T-cell (primary cell): ENCODE measurements at regions of chr16 and their contacts with region 1.

Region 1: DNA sequence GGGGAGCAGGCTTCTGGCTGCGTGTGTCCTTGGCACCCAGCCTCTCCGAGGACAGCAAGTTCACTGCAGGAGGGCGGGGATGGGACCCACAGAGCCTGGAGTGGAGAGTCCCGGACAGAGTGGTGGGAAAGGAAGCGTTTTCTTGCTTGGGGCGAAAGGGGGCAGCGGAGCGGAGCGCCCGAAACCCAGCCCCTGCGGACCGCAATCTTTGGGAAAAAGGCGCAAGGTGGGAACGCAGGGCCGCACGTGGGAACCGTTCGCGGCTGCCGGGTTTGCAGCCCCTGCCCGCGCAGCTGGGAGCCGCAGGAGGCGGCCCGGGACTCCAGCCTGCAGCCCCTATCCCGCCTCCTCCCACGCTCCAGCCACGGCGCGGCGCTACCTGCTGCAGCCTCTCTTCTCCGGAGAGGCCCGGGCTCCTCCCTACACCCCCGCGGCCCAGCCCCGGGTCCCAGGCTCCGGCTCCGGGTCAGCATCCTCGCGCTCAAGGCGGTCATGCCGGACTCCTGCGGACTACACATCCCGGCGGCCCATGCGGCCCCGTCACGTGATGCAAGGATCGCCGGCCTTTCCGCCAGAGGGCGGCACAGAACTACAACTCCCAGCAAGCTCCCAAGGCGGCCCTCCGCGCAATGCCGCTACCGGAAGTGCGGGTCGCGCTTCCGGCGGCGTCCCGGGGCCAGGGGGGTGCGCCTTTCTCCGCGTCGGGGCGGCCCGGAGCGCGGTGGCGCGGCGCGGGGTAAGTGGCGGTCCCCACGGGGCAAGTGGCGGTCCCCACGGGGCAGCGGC is at the starts of genes NTHL1 and TSC2:
- DNase-seq: peak; percentile 79 to 95 (median 86)
- ATAC-seq: peak; percentile 94 to 96 (median 96)
- H3K4me3 ChIP-seq: peak within 1 kb of the TSS; percentile 79 to 94
- H3K4me3 Mint-ChIP-seq: peak within 1 kb of the TSS; percentile 90 to 92 (median 90)
- H3K27ac ChIP-seq: peak within 1 kb of the TSS; percentile 38
- H3K27ac Mint-ChIP-seq: peak within 1 kb of the TSS; percentile 23 to 71
- H3K4me1 ChIP-seq: peaks cover 13 to 30% of the 10 kb centered on the region in 2 experiments
- H3K4me1 Mint-ChIP-seq: peaks cover 20 to 23% (median 20%) of the 10 kb centered on the region in 3 donors
- H3K27me3 ChIP-seq: no peaks in the 10 kb centered on the region
- H3K27me3 Mint-ChIP-seq: no peaks in the 10 kb centered on the region
- total RNA-seq, gene NTHL1: 5.8 to 24.1 (median 18.3) TPM
- total RNA-seq, gene TSC2: 134 to 181 (median 161) TPM

Region 2: GRCh38 chr16:2142942-2143877 is 95.7 kb after region 1 on chr16:
- CTCF ChIA-PET with region 1: interaction called in 1 of 2 experiments, 12 read pairs
- POLR2A ChIA-PET with region 1: interaction called in 1 of 2 experiments, 3 read pairs
- DNase-seq: no peak
- ATAC-seq: no peak
- H3K4me3 ChIP-seq: no peak overlapping the region
- H3K4me3 Mint-ChIP-seq: no peak overlapping the region
- H3K27ac ChIP-seq: no peak overlapping the region
- H3K27ac Mint-ChIP-seq: no peak overlapping the region
- H3K4me1 ChIP-seq: peaks cover 0 to 15% of the 10 kb centered on the region in 2 experiments
- H3K4me1 Mint-ChIP-seq: peaks cover 4 to 8% (median 4%) of the 10 kb centered on the region in 3 donors
- H3K27me3 ChIP-seq: peaks cover 0 to 12% of the 10 kb centered on the region in 2 experiments
- H3K27me3 Mint-ChIP-seq: no peaks in the 10 kb centered on the region